ENCODE measurements at regions of chr3 and their contacts with region 1.

Region 1: DNA sequence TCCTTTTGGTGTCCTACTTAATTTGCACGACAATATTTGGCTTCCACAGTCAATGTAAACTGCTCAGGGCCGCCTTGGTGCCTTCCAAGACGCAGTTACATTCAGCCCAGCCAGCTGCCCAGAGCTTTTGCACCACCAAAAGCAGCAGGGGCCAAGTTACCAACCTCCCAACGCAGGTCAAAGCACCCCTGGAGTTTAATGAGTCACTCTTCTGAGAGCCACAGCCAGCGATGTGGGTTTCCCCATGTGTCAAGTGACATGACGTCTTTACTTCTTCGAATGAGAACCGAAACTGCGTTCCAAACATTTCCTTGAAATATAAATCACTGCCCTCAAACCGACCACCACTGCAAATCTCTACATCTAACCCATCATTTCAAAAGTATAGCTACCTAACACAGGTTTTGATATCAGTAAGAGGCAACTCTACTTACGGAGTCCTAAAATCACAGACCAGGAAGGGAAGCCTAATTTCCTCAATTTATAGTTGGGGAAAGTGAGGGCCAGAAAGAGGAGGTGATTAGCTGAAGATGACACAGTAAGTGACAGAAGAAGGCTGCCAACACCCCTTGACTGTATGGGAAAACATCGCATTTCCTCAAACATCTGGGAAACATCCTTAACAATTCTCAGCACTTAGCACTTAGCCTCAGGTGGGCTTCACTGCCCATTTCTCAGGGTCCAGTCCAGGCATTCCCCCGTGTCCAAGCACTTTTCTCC is 24.5 kb downstream of the MB21D2 start:
- DNase-seq: peak; percentile 90
- H3K4me3 Mint-ChIP-seq: peak overlapping the region; percentile 5
- H3K27ac Mint-ChIP-seq: peak overlapping the region; percentile 10
- H3K4me1 Mint-ChIP-seq: peaks cover 30% of the 10 kb centered on the region
- H3K27me3 Mint-ChIP-seq: no peaks in the 10 kb centered on the region
- CTCF ChIP-seq: no peak

Region 2: GRCh38 chr3:192758654-192759053 is 134.5 kb before region 1 on chr3:
- CTCF ChIA-PET with region 1: no interaction called
- POLR2A ChIA-PET with region 1: no interaction called
- intact Hi-C with region 1: no loop called
- DNase-seq: no peak
- H3K4me3 Mint-ChIP-seq: no peak overlapping the region
- H3K27ac Mint-ChIP-seq: no peak overlapping the region
- H3K4me1 Mint-ChIP-seq: no peaks in the 10 kb centered on the region
- H3K27me3 Mint-ChIP-seq: peaks cover 73% of the 10 kb centered on the region
- CTCF ChIP-seq: no peak

Region 3: GRCh38 chr3:192904645-192905289 is 11.6 kb after region 1 on chr3:
- CTCF ChIA-PET with region 1: interaction called, 10 read pairs
- POLR2A ChIA-PET with region 1: interaction called, 4 read pairs
- intact Hi-C with region 1: no loop called
- DNase-seq: no peak
- H3K4me3 Mint-ChIP-seq: no peak overlapping the region
- H3K27ac Mint-ChIP-seq: no peak overlapping the region
- H3K4me1 Mint-ChIP-seq: peaks cover 8% of the 10 kb centered on the region
- H3K27me3 Mint-ChIP-seq: no peaks in the 10 kb centered on the region
- CTCF ChIP-seq: no peak

Region 4: DNA sequence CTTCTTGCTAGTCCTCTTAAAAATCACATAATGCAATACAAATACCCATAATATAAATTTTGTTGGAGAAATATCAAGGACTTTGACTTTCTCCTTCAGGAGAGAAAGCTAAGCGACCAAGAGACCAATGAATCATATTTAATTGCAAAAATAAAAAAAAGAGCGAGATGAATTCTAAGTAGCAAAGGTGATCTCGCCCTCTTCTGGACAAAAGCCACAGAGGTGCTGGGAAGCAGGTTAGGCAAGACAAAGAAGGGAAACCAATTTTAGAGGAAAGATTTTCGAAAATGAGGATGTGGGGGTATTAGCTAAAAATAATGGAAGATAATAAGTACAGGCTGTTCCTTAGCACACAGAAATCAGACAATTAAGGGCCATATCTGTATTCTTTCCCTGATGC is 236.5 kb after region 1 on chr3:
- CTCF ChIA-PET with region 1: no interaction called
- POLR2A ChIA-PET with region 1: no interaction called
- intact Hi-C with region 1: no loop called
- DNase-seq: peak; percentile 34
- H3K4me3 Mint-ChIP-seq: no peak overlapping the region
- H3K27ac Mint-ChIP-seq: no peak overlapping the region
- H3K4me1 Mint-ChIP-seq: peaks cover 7% of the 10 kb centered on the region
- H3K27me3 Mint-ChIP-seq: peaks cover 56% of the 10 kb centered on the region
- CTCF ChIP-seq: no peak